Thyroid gland (tissue), 4 donors: ENCODE measurements at regions of chr12 and their contacts with region 1.

Region 1: GRCh38 chr12:59403259-59403932 is 192.4 kb upstream of the SLC16A7 start:
- DNase-seq: peak; percentile 30
- H3K4me3 ChIP-seq: no peak overlapping the region
- H3K27ac ChIP-seq: no peak overlapping the region
- H3K4me1 ChIP-seq: no peaks in the 10 kb centered on the region
- H3K27me3 ChIP-seq: no peaks in the 10 kb centered on the region
- CTCF ChIP-seq: peak; percentile 12 to 79 (median 42)
- POLR2A ChIP-seq: no peak

Region 2: GRCh38 chr12:59792647-59793046 is 389.3 kb after region 1 on chr12:
- intact Hi-C with region 1: loop called (anchors 10 kb)
- DNase-seq: no peak
- H3K4me3 ChIP-seq: no peak overlapping the region
- H3K27ac ChIP-seq: no peak overlapping the region
- H3K4me1 ChIP-seq: no peaks in the 10 kb centered on the region
- H3K27me3 ChIP-seq: no peaks in the 10 kb centered on the region
- CTCF ChIP-seq: no peak
- POLR2A ChIP-seq: no peak